ENCODE measurements at regions of chr12 and their contacts with region 1.

Region 1: DNA sequence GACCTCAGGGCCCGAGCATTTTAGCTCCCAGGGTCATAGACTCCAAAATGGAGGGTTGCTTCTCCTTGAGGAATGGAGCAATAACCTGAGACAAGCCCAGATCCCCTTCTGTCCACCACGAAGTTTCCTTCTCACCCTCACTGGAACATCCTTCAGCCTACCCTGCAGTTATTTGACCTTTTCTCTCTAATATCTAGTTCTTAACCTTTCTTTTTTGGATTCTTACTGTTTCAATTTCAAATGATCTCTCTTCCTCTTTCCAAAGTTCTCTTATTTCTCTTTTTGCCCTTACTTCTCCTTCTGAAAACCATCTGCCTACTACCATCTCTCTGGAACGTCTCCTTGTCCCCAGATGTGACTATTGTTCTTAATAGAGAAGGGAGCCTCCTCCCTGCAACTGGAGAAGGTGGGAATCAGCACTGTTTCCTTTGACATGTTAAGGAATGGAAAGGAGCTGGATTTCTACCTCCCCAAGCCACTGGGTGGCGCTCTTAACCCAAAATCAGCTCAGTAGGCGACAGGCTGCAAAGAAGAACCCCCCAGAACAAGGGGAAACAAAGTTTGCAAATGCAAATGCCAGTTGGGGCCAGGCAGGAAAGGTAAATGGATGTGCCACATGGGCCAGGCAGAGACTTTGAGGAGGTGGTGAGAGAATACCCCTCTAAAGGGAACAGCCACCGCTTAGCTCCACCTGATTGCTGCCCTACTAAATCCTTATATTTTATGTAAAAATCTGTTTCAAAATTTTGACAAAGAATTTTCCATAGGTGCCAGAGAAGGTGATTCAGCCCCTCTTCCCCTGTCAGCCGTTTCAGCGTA is 22.4 kb upstream of the PDE1B start:
- DNase-seq: peak; percentile 78 to 93
- H3K4me3 ChIP-seq: no peak overlapping the region
- H3K27ac ChIP-seq: no peak overlapping the region
- H3K4me1 ChIP-seq: peaks cover 0 to 16% (median 5%) of the 10 kb centered on the region in 4 experiments; a peak in 4 of 7 replicates
- H3K27me3 ChIP-seq: peaks cover 0 to 2% (median 2%) of the 10 kb centered on the region in 4 experiments; a peak in 4 of 7 replicates
- CTCF ChIP-seq: peak; percentile 61 to 95 (median 94)
- EP300 ChIP-seq: no peak
- POLR2A ChIP-seq: no peak
- RAD21 ChIP-seq: peak; percentile 98 to 99

Region 2: DNA sequence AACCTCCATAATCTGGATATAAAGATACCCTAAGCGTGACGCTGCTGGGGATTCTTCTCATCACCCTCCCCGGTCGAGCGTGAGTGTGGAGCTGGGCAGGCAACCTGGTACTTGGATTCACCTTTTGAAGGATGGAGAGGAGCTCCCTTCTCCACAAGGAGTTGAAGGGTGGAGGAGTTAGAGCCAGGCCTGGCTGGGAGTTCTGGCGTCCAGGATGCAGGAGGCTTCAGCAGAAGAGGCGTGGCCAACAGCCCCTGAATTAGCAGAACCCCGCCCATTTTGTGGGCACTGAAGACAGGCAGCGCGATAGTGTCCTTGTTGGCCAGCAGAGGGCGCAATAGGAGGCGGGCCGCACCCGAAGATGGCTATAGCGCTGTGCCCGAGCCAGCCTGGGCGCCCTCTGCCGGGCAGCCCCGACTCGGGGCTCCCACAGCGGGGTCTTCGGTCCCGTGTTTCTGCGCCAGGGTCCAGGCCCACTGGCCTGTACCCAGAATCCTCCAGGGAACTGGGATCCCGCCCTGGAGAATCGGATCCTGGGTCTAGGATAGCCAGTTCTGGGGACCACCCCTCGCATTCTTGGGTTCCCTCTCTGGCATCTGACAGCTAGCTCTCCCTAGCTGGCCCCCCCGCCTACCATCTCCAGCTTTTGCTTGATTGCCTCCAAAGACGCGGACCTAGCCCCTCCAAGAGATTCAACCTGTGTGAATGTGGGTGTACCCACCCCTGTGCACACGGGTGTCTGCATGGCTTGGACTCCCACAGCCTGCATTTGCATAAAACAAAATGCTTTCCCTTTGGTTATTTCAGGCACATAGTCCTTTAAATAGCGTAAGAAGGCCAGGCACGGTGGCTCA is 312.2 kb before region 1 on chr12:
- CTCF ChIA-PET with region 1: no interaction called
- POLR2A ChIA-PET with region 1: no interaction called
- DNase-seq: peak; percentile 78 to 96
- H3K4me3 ChIP-seq: no peak overlapping the region
- H3K27ac ChIP-seq: no peak overlapping the region
- H3K4me1 ChIP-seq: peaks cover 0 to 26% (median 17%) of the 10 kb centered on the region in 4 experiments; a peak in 6 of 7 replicates
- H3K27me3 ChIP-seq: peaks cover 1 to 42% (median 27%) of the 10 kb centered on the region in 4 experiments; a peak in 6 of 7 replicates
- CTCF ChIP-seq: peak; percentile 98 to 100 (median 100)
- EP300 ChIP-seq: no peak
- POLR2A ChIP-seq: no peak
- RAD21 ChIP-seq: peak; percentile 54 to 68

Region 3: GRCh38 chr12:54398995-54399793 is 127.8 kb before region 1 on chr12:
- CTCF ChIA-PET with region 1: interaction called, 19 read pairs
- POLR2A ChIA-PET with region 1: no interaction called
- DNase-seq: peak in 1 of 2 experiments; percentile 98
- H3K4me3 ChIP-seq: no peak overlapping the region
- H3K27ac ChIP-seq: no peak overlapping the region
- H3K4me1 ChIP-seq: no peaks in the 10 kb centered on the region
- H3K27me3 ChIP-seq: no peaks in the 10 kb centered on the region
- CTCF ChIP-seq: peak; percentile 97 to 100 (median 99)
- EP300 ChIP-seq: no peak
- POLR2A ChIP-seq: no peak
- RAD21 ChIP-seq: peak; percentile 96 to 97

Region 4: DNA sequence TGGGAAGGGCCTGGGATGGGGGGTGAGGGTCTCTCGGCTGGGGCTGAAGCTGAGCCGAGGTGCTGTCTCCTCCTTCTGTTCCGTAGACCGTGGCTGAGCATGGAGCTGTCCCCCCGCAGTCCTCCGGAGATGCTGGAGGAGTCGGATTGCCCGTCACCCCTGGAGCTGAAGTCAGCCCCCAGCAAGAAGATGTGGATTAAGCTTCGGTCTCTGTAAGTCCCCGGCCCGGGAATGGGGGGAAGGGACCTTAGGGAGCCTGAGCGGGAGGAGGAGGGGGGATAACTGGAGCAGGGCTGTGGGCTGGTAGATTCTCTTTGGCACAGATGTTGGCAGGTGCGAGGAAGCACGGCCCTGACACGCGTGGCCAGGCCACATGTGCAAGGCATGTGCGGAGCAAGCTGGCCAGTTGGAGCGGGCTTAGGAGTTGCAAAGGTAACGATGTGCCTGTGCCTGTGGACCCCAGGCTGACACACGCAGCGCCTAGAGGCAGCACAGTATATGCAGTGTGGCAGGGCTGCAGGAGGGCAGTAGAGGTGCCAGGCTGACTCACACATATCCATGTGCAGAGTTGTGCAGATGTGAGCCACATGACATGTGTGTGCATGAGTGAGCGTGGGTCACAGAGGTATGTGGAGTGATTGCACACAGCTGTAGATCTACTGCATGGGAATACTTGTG is 22.9 kb after region 1 on chr12:
- CTCF ChIA-PET with region 1: interaction called, 76 read pairs
- POLR2A ChIA-PET with region 1: interaction called, 8 read pairs
- DNase-seq: no peak
- H3K4me3 ChIP-seq: peak overlapping the region; percentile 29 to 77 (median 64)
- H3K27ac ChIP-seq: no peak overlapping the region
- H3K4me1 ChIP-seq: peaks cover 2 to 15% (median 10%) of the 10 kb centered on the region in 4 experiments
- H3K27me3 ChIP-seq: peaks cover 17 to 75% (median 57%) of the 10 kb centered on the region in 4 experiments
- CTCF ChIP-seq: no peak
- EP300 ChIP-seq: no peak
- POLR2A ChIP-seq: no peak
- RAD21 ChIP-seq: no peak

Region 5: GRCh38 chr12:54565310-54565985 is 38.4 kb after region 1 on chr12:
- CTCF ChIA-PET with region 1: interaction called, 120 read pairs
- POLR2A ChIA-PET with region 1: no interaction called
- DNase-seq: no peak
- H3K4me3 ChIP-seq: peak overlapping the region in 3 of 4 experiments; percentile 3 to 29 (median 19); a peak in 4 of 8 replicates
- H3K27ac ChIP-seq: no peak overlapping the region
- H3K4me1 ChIP-seq: peaks cover 10 to 17% (median 14%) of the 10 kb centered on the region in 4 experiments; a peak in 6 of 7 replicates
- H3K27me3 ChIP-seq: peaks cover 15 to 38% (median 35%) of the 10 kb centered on the region in 4 experiments
- CTCF ChIP-seq: no peak
- EP300 ChIP-seq: no peak
- POLR2A ChIP-seq: no peak
- RAD21 ChIP-seq: no peak

Region 6: DNA sequence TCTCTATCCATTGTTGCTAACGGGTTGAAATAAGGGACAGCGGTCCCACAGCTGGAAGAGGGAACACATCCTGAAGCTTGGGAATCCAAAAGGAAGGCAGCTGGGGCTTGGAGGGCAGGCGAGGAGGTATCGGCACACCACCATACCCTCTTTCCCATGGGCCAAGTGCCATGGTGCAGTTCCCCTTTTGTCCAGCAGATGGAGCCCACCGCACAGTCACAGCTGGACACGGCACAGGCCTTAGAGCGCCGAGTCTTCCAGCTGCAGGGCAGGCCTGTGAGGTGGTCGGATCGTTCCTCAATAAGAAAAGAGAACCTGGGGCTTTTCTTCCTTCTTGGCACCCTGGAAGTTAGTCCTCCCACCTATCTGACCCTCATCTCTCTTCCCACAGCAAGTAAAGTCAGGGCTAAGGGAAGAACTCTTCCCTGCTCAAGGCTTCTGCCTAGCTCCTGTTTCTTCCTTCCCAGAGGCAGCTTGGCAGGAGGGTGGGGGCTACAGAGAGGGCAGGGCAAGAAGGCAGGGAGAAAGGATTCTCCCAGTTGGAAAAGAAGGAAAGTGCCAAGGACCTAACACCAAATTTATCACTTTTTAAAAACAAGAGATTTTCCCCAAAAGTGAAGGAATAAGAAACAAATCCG is 52.8 kb after region 1 on chr12:
- CTCF ChIA-PET with region 1: interaction called, 120 read pairs
- POLR2A ChIA-PET with region 1: interaction called, 3 read pairs
- DNase-seq: peak; percentile 67 to 99
- H3K4me3 ChIP-seq: no peak overlapping the region
- H3K27ac ChIP-seq: no peak overlapping the region
- H3K4me1 ChIP-seq: peaks cover 0 to 10% (median 3%) of the 10 kb centered on the region in 4 experiments; a peak in 5 of 7 replicates
- H3K27me3 ChIP-seq: no peaks in the 10 kb centered on the region; a peak in 1 of 7 replicates
- CTCF ChIP-seq: peak; percentile 94 to 100 (median 100)
- EP300 ChIP-seq: no peak
- POLR2A ChIP-seq: no peak
- RAD21 ChIP-seq: peak; percentile 86 to 90

Region 7: GRCh38 chr12:54596526-54596946 is 69.5 kb after region 1 on chr12:
- CTCF ChIA-PET with region 1: interaction called, 28 read pairs
- POLR2A ChIA-PET with region 1: interaction called, 3 read pairs
- DNase-seq: peak; percentile 50 to 88
- H3K4me3 ChIP-seq: no peak overlapping the region
- H3K27ac ChIP-seq: no peak overlapping the region
- H3K4me1 ChIP-seq: 0 out of 7 replicates have a peak, but pooled peaks cover 0 to 2% (median 0%) of the 10 kb centered on the region in 4 experiments
- H3K27me3 ChIP-seq: peaks cover 0 to 19% (median 13%) of the 10 kb centered on the region in 4 experiments; a peak in 3 of 7 replicates
- CTCF ChIP-seq: peak; percentile 75 to 97 (median 84)
- EP300 ChIP-seq: no peak
- POLR2A ChIP-seq: no peak
- RAD21 ChIP-seq: peak; percentile 72 to 77

Region 8: GRCh38 chr12:54666008-54666407 is 139.0 kb after region 1 on chr12:
- CTCF ChIA-PET with region 1: no interaction called
- POLR2A ChIA-PET with region 1: no interaction called
- DNase-seq: no peak
- H3K4me3 ChIP-seq: no peak overlapping the region
- H3K27ac ChIP-seq: no peak overlapping the region
- H3K4me1 ChIP-seq: no peaks in the 10 kb centered on the region
- H3K27me3 ChIP-seq: no peaks in the 10 kb centered on the region; a peak in 1 of 7 replicates
- CTCF ChIP-seq: no peak
- EP300 ChIP-seq: no peak
- POLR2A ChIP-seq: no peak
- RAD21 ChIP-seq: no peak